Left ventricle myocardium inferior (tissue), 1 donor: ENCODE measurements at regions of chr13 and their contacts with region 1.

Region 1: GRCh38 chr13:107211073-107211472 is 643.1 kb upstream of the ARGLU1 start:
- DNase-seq: peak; percentile 58
- H3K4me3 ChIP-seq: peak overlapping the region; percentile 43
- H3K27ac ChIP-seq: no peak overlapping the region
- H3K4me1 ChIP-seq: peaks cover 40% of the 10 kb centered on the region
- H3K27me3 ChIP-seq: peaks cover 19% of the 10 kb centered on the region
- CTCF ChIP-seq: peak; percentile 95

Region 2: DNA sequence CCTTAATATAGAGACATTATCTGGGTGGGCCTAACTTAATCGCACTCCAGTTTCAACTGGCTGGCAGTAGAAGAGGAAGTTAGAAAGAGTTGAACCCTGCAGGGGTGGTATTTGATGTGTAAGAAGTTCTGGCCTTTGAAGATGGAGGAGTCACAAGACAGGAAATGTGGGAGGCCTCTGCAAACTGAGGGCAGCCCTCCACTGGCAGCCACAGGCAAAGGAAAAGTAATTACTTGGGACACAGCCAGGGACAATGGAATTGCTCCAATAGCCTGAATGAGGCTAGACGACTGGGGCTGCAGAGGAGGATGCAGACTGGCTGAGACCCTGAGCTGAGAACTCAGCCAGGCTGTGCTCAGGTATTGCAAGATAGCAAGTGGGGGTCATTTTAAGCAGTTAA is 60.2 kb after region 1 on chr13:
- intact Hi-C with region 1: no loop called
- DNase-seq: no peak
- H3K4me3 ChIP-seq: no peak overlapping the region
- H3K27ac ChIP-seq: no peak overlapping the region
- H3K4me1 ChIP-seq: no peaks in the 10 kb centered on the region
- H3K27me3 ChIP-seq: no peaks in the 10 kb centered on the region
- CTCF ChIP-seq: no peak

Region 3: DNA sequence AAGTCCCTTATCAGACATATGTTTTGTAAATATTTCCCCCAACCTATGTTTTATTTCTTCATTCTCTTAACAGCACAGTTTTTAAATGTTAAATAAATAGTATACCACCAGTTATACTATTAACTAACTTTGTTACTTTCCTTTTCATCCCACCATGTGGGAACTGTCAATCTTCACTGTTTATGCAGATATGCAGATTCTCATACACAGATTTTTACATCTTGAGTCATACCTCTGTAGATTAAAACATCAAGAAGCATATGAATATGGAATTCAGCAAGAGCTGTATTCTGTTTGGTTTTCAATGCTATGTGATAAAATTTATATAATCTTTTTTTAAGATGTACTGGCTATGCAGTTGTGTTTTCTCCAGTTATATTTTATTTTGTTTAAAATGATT is 438.0 kb after region 1 on chr13:
- intact Hi-C with region 1: loop called (anchors 5 kb)
- DNase-seq: no peak
- H3K4me3 ChIP-seq: no peak overlapping the region
- H3K27ac ChIP-seq: no peak overlapping the region
- H3K4me1 ChIP-seq: no peaks in the 10 kb centered on the region
- H3K27me3 ChIP-seq: peaks cover 24% of the 10 kb centered on the region
- CTCF ChIP-seq: no peak

Region 4: DNA sequence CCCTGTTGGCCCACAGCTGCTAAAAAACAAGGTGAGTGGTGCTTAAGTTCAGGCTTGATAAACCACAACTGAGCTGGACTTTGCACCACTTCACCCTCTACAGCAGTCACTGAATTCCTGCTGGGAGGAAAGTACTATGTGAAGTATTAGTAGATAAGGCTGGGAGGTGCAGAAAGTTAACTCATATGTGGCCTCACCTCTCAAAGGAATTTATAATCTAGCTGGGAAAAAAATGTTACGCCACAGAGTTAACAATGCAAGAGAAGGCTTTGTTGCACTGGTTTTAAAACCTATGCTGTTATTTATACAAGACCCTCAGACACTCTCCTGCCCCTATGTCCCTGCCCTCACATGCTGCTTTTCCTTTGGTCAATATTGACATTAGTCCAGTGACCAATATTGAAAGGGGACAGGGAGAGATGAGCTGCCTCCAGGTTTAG is 943.4 kb after region 1 on chr13:
- intact Hi-C with region 1: loop called (anchors 5 kb)
- DNase-seq: no peak
- H3K4me3 ChIP-seq: no peak overlapping the region
- H3K27ac ChIP-seq: no peak overlapping the region
- H3K4me1 ChIP-seq: no peaks in the 10 kb centered on the region
- H3K27me3 ChIP-seq: peaks cover 33% of the 10 kb centered on the region
- CTCF ChIP-seq: no peak